Panc1 (cell line): ENCODE measurements at regions of chr6 and their contacts with region 1.

Region 1: DNA sequence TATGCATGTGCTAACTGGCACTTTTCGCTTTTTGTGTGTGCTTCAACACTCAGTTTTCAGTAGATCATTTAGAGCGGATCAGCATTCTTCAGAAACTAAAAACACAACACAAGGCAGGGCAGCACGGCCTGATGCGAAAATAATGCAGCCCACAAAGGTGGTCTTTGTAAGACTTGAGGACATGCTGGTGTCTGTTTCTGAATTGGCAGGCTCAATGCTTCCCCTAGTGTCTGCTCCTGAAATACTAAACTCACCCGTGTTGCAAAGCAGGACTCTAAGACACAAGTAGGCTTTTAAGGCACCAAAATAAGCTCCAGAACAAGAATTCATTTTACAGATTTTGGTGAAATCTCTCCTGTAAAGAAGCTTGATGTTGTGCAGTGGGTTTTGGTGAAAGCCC is 676.5 kb downstream of the TENT5A start:
- DNase-seq: no peak
- ATAC-seq: no peak
- H3K4me3 ChIP-seq: no peak overlapping the region
- H3K27ac ChIP-seq: no peak overlapping the region
- H3K4me1 ChIP-seq: no peaks in the 10 kb centered on the region
- H3K27me3 ChIP-seq: no peaks in the 10 kb centered on the region
- CTCF ChIP-seq: peak; percentile 49

Region 2: DNA sequence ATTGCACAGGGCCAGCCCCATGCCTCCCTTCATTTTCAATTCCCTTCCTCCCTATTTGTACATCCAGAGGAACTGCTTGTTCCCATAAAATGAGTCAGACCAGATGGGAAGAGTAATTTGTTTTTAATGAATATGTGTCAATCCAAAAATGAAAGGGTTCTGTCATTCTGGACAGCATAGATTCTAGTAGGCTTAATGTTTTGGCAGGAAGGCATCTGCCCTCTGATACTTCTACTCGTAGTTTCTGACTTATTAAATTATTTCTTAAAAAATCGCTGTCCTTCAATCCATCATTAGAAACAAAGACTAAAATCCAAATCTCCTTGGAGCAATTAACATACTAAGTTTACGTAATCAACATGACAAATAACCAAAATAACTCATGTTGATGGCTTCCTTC is 11.0 kb after region 1 on chr6:
- CTCF ChIA-PET with region 1: no interaction called
- POLR2A ChIA-PET with region 1: interaction called, 14 read pairs
- in situ Hi-C with region 1: no loop called
- intact Hi-C with region 1: no loop called
- DNase-seq: no peak
- ATAC-seq: no peak
- H3K4me3 ChIP-seq: no peak overlapping the region
- H3K27ac ChIP-seq: no peak overlapping the region
- H3K4me1 ChIP-seq: no peaks in the 10 kb centered on the region
- H3K27me3 ChIP-seq: no peaks in the 10 kb centered on the region
- CTCF ChIP-seq: no peak